OCI-LY7 (cell line): ENCODE measurements at regions of chr6 and their contacts with region 1.

Region 1: DNA sequence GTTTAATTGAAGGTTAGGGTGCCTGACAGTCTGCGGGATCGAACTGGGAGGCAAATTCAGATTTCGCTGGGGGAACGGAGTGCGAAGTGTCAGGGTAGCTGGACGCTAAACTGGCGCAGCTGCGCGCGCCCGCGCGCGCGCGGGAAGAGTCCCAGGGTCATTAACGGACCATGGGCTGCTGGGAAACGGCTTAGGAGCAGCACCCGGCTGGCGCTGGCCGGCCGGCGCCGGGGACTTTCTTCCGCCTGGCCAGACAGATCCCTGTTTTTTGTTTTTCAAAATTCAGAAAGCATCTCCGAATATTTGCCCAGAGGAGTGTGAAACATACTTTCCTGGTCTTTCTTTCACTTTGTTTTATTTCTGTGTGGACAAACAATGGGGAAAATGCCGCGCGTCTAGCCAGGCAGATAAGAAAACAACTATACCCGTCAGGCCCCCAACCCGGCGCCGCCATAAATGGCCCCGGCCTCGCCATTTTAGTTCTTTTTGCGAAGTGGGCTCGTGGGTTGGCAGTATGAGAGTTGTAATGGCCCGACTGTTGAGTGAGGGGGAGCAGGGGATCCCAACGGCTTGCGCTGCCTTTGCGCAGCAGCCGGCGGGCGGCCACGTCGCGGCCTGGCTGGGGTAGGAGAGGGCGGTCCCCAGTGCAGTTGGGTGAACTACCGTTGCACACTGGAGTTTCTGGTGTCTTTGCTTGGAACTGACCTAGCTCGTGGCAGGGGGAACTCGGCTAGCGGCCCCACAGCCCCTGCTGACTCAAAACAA is 7.1 kb downstream of the HSPA1B start:
- DNase-seq: peak; percentile 91
- H3K4me3 ChIP-seq: peak overlapping the region; percentile 99
- H3K27ac ChIP-seq: peak overlapping the region; percentile 95
- H3K4me1 ChIP-seq: peaks cover 59% of the 10 kb centered on the region
- CTCF ChIP-seq: no peak

Region 2: GRCh38 chr6:30600451-30600961 is 1234.1 kb before region 1 on chr6:
- CTCF ChIA-PET with region 1: no interaction called
- POLR2A ChIA-PET with region 1: no interaction called
- intact Hi-C with region 1: no loop called
- DNase-seq: no peak
- H3K4me3 ChIP-seq: no peak overlapping the region
- H3K27ac ChIP-seq: no peak overlapping the region
- H3K4me1 ChIP-seq: no peaks in the 10 kb centered on the region
- CTCF ChIP-seq: no peak

Region 3: GRCh38 chr6:31493875-31494694 is 340.5 kb before region 1 on chr6:
- CTCF ChIA-PET with region 1: no interaction called
- POLR2A ChIA-PET with region 1: no interaction called
- intact Hi-C with region 1: loop called (anchors 10 kb)
- DNase-seq: peak; percentile 88
- H3K4me3 ChIP-seq: peak overlapping the region; percentile 82
- H3K27ac ChIP-seq: peak overlapping the region; percentile 78
- H3K4me1 ChIP-seq: peaks cover 35% of the 10 kb centered on the region
- CTCF ChIP-seq: peak; percentile 95

Region 4: DNA sequence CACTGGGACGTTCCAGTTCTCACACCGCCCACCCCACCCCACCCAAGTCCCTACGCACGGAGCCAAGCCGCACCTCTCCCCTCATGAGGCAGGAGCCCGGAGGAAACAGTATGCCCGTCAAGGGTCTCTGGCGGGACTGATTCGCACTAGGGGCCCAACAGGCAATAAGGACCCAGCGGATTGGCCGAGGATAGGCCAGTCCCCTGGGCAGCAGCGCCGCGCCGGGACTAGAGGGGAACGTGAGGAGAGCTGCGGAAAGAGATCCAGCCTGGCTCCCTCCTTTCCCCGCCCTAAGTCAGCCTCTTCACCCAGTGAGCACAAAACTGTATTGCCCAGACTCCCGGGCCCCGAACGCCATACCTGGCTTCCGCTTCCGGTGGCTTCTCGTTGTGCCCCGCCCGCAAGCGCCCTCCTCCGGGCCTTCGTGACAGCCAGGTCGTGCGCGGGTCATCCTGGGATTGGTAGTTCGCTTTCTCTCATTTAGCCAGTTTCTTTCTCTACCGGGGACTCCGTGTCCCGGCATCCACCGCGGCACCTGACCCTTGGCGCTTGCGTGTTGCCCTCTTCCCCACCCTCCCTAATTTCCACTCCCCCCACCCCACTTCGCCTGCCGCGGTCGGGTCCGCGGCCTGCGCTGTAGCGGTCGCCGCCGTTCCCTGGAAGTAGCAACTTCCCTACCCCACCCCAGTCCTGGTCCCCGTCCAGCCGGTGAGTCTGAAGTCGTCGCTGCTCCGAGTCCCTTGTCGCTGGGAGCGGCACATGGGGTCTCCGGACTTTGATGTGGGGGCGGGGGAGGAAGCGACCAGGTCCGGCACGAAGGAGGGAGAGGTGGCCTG is 168.9 kb before region 1 on chr6 and contains the start of gene CSNK2B:
- CTCF ChIA-PET with region 1: no interaction called
- POLR2A ChIA-PET with region 1: interaction called, 4 read pairs
- intact Hi-C with region 1: loop called (anchors 2 kb)
- DNase-seq: peak; percentile 98
- H3K4me3 ChIP-seq: peak within 1 kb of the TSS; percentile 99
- H3K27ac ChIP-seq: peak within 1 kb of the TSS; percentile 90
- H3K4me1 ChIP-seq: peaks cover 43% of the 10 kb centered on the region
- CTCF ChIP-seq: no peak
- total RNA-seq, gene CSNK2B: 207 and 230 TPM in 2 replicates

Region 5: DNA sequence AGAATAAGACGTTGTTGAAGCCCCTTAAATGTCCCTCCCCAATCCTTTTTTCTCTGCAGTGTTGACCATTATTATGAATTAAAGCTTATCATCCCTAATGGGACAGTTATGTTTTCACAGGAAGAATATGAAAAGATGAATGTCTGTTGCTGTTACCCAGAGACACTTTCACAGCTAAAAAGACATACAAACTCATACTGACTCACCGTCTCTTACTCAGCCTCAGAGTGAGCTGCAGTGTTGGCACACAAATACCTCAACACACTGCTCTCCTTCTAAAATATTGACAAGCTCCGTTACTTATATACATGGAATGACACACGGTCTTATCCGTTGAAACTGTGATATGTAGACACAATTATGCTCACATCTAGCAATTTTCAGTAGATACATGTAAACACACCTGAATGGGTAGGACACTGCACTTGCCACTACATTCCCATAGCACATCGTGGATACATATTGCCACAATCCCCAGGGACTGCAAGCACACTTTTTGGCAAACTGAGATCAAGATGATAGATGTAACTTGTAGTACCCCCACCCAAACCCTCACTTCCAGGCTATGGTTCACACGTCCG is 81.8 kb before region 1 on chr6:
- CTCF ChIA-PET with region 1: no interaction called
- POLR2A ChIA-PET with region 1: no interaction called
- intact Hi-C with region 1: no loop called
- DNase-seq: no peak
- H3K4me3 ChIP-seq: no peak overlapping the region
- H3K27ac ChIP-seq: no peak overlapping the region
- H3K4me1 ChIP-seq: no peaks in the 10 kb centered on the region
- CTCF ChIP-seq: no peak

Region 6: DNA sequence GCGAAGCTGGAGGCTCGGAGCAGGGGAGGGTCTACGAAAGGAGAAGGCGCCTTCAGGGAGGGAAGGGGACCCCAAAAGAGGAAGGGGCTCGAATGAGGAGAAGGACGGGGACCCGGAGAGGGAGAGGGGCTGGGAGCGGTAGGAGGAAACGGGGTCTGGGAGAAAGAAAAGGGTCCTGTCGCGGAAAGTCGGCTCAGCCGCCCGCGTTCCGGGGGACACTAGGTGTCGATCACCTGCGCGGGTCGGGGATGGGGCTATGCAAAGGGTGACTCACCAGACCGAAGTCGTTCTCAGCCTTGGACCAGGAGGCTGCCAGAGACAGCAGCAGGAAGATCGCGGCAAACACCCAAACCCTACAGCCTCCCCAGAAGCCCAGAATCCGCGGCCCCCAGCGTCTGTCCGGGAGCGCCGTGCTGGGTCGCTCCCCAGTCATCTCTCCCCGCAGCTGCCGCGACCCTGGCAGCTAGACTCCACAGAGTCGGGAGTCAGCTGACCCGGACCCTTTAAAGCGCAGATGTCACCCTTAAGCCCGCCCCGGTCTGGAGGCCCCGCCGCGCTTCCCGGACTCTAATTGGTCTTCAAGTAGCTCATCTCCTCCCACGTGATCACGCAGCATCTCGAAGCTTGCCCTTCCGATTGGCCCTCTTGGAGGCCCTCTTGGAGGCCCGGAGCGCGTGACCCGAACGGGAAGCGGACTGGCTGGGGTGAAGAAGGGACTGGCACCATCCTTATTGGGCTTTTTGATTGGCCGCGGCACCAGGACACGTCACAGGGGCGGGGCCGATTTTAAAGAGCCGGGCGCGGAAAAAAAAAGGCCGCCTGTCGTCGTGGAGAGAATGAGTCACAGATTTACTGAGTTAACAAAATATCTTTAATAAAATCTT is 28.0 kb after region 1 on chr6 and contains the start of gene NEU1:
- CTCF ChIA-PET with region 1: no interaction called
- POLR2A ChIA-PET with region 1: interaction called, 6 read pairs
- intact Hi-C with region 1: loop called (anchors 1 kb)
- DNase-seq: peak; percentile 100
- H3K4me3 ChIP-seq: peak within 1 kb of the TSS; percentile 75
- H3K27ac ChIP-seq: peak within 1 kb of the TSS; percentile 74
- H3K4me1 ChIP-seq: peaks cover 20% of the 10 kb centered on the region
- CTCF ChIP-seq: no peak
- total RNA-seq, gene NEU1: 5.5 and 7.0 TPM in 2 replicates

Region 7: GRCh38 chr6:31901953-31902643 is 67.5 kb after region 1 on chr6 and contains the start of gene ZBTB12:
- CTCF ChIA-PET with region 1: interaction called, 3 read pairs
- POLR2A ChIA-PET with region 1: no interaction called
- intact Hi-C with region 1: loop called (anchors 2 kb)
- DNase-seq: peak; percentile 95
- H3K4me3 ChIP-seq: peak within 1 kb of the TSS; percentile 75
- H3K27ac ChIP-seq: peak within 1 kb of the TSS; percentile 11
- H3K4me1 ChIP-seq: peaks cover 30% of the 10 kb centered on the region
- CTCF ChIP-seq: no peak
- total RNA-seq, gene ZBTB12: 12.8 and 17.6 TPM in 2 replicates

Region 8: GRCh38 chr6:31958741-31959739 is 124.4 kb after region 1 on chr6 and contains the starts of genes NELFE and SKIC2:
- CTCF ChIA-PET with region 1: no interaction called
- POLR2A ChIA-PET with region 1: no interaction called
- intact Hi-C with region 1: loop called (anchors 5 kb)
- DNase-seq: peak; percentile 99
- H3K4me3 ChIP-seq: peak within 1 kb of the TSS; percentile 97
- H3K27ac ChIP-seq: no peak within 1 kb of the TSS
- H3K4me1 ChIP-seq: peaks cover 18% of the 10 kb centered on the region
- CTCF ChIP-seq: no peak
- total RNA-seq, gene NELFE: 94.8 and 134 TPM in 2 replicates
- total RNA-seq, gene SKIC2: 45.8 and 62.2 TPM in 2 replicates